ENCODE measurements at regions of chr20 and their contacts with region 1.

Region 1: GRCh38 chr20:10596726-10597125 is 77.1 kb downstream of the JAG1 start:
- DNase-seq: no peak
- ATAC-seq: no peak
- H3K4me3 ChIP-seq: no peak overlapping the region
- H3K27ac ChIP-seq: no peak overlapping the region
- H3K4me1 ChIP-seq: peaks cover 0 to 11% of the 10 kb centered on the region in 2 donors
- H3K27me3 ChIP-seq: no peaks in the 10 kb centered on the region

Region 2: GRCh38 chr20:10185741-10186558 is 410.8 kb before region 1 on chr20:
- intact Hi-C with region 1: no loop called
- DNase-seq: peak in 1 of 2 donors; percentile 51
- ATAC-seq: peak; percentile 60
- H3K4me3 ChIP-seq: no peak overlapping the region
- H3K27ac ChIP-seq: no peak overlapping the region
- H3K4me1 ChIP-seq: no peaks in the 10 kb centered on the region
- H3K27me3 ChIP-seq: peaks cover 0 to 1% of the 10 kb centered on the region in 2 donors

Region 3: DNA sequence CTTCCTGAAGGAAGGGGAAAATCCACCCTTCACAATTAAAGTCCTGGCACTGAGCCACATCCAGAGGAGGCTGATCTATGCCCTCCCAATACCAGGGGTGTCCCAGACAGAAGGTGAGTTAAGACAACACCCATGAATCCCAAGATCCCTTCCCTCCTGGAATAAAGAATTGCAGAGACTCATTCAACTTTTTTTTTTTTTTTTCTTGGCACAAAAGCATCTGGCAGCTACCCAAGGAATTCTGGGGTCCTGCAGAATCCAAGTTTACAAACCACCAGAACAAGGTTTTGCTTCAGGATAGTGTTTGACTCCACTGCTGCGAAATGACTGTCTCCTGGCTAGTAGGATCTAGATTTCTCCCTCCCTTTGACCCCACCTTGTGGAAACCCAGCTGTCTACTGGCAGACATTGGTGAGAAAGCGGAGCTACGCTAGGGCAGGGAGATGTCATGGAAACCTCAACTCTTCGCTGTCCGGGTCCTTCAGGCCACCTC is 39.6 kb after region 1 on chr20:
- intact Hi-C with region 1: loop called in 1 of 2 experiments (anchors 5 kb)
- DNase-seq: no peak
- ATAC-seq: peak; percentile 20
- H3K4me3 ChIP-seq: no peak overlapping the region
- H3K27ac ChIP-seq: peak overlapping the region; percentile 80 to 100
- H3K4me1 ChIP-seq: peaks cover 8 to 9% of the 10 kb centered on the region in 2 donors
- H3K27me3 ChIP-seq: no peaks in the 10 kb centered on the region

Region 4: DNA sequence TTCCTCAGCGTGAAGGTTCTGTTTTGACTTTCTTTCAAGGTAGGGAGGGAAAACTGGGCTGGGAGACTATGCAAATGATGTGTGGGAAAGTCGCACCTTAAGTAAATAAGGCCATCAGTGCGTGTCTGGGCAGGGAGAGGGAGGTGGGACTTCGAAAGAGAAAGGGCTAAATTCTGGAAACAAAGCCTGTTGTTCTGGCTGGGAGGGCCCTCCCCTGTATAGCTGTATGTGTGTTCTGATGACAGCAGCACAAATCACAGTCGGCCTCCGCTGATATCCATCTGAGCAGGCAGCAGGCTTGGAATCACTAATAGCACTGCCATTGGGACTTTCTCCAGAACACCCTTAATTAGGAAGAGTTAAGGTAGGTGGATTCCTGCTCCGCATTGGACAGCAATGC is 57.9 kb after region 1 on chr20:
- intact Hi-C with region 1: loop called in 1 of 2 experiments (anchors 10 kb)
- DNase-seq: peak in 1 of 2 donors; percentile 52
- ATAC-seq: no peak
- H3K4me3 ChIP-seq: no peak overlapping the region
- H3K27ac ChIP-seq: peak overlapping the region; percentile 89 to 95
- H3K4me1 ChIP-seq: peaks cover 2 to 4% of the 10 kb centered on the region in 2 donors
- H3K27me3 ChIP-seq: no peaks in the 10 kb centered on the region

Measured in aorta (tissue), 5 donors.